ENCODE measurements at regions of chr5 and their contacts with region 1.

Region 1: DNA sequence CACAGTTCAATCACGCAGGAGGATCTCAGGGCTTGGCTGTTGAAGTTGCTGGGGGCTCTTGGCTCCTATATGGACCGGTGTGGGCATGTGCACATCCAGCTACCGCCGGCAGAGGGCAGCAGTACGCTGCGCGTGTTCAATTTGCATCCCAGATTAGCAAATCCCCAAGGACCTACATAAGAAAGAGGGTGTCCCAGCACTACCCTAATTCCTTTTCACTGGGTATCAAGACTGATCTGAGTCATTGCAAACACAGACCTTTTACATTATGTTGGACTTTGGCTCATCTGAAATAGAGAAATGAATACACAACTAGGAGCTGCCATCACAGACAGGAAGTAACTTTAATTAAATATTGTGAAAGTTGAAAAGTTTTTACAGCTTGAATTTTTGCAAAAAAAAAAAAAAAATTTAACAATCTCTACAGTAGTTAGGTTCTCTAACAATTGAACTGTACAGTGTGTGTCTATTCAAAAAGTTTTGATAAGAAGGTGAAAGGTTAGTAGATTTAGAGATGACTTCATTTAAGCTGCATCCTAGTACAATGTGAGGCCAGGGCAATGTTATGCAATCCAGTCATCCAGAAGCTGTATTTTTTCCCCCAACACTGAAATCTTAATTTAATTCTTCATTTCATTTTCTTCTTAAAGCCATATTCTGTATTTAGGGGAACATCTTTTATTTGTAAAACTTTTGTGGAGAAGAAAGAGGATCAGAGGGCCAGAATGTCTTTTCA is 404.0 kb downstream of the EBF1 start:
- DNase-seq: peak; percentile 79
- ATAC-seq: peak; percentile 80
- H3K4me3 Mint-ChIP-seq: no peak overlapping the region
- H3K27ac Mint-ChIP-seq: no peak overlapping the region
- H3K4me1 Mint-ChIP-seq: peaks cover 2% of the 10 kb centered on the region
- H3K27me3 Mint-ChIP-seq: no peaks in the 10 kb centered on the region
- CTCF ChIP-seq: peak; percentile 98

Region 2: DNA sequence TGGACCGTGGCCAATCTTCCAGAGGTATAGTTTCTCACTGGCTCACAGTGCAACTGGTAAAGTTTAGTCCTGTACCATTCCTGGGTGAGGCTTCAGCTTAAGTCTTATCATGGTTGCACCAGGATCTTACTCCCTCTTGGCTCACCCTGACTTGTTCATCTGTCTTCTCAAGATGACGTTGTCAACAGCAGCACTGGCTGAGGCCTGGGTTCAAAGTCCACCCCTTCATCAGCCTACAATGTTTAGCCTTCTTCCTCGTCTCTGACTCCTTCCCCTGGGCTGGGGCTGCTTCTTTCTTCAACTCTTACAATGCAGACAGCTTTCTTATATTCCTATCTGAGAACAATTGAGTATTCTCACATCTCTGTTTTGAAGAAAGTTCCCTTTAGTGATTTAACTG is 525.7 kb before region 1 on chr5:
- CTCF ChIA-PET with region 1: interaction called, 19 read pairs
- POLR2A ChIA-PET with region 1: no interaction called
- intact Hi-C with region 1: loop called (anchors 10 kb)
- DNase-seq: no peak
- ATAC-seq: no peak
- H3K4me3 Mint-ChIP-seq: no peak overlapping the region
- H3K27ac Mint-ChIP-seq: no peak overlapping the region
- H3K4me1 Mint-ChIP-seq: no peaks in the 10 kb centered on the region
- H3K27me3 Mint-ChIP-seq: peaks cover 7% of the 10 kb centered on the region
- CTCF ChIP-seq: no peak

Region 3: DNA sequence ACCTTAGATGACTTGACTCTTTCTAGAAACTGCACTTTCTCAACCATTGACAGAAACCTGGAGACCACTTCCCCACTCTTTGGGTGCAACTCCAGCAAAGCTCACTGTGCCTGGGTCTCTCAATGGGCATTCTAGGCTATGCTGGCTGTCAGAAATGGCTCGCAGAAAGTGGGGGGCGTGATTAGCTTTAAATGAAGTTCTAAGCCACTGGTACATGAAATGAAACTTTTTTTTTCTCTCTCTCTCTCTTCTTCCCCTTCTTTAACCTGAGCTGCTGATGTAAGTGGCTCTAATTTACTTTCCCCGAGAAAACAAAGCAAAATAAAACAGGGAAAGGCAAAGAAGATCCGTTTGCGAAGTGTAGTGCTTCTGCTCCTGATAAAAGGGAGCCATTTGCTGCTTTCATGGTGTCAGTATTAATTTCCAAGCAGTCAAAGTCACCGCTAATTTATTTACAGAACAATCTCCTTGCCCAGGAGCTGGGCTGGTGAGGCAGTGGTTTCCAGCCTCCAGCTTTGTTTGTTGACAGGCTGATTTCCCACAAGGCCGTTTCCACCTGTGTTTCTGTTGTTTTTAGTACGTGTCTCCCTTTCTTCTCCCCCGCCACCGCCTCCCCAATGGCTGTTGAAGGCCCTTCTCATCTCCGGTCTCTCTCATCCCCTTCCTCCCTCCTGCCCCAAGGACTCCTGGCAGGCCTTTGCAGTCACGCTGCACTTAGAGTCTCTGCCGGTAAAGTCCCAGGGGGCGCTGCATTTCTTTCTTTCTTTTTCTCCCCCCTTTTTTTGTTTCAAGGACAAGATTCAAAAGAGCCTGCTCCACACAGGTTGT is 18.9 kb before region 1 on chr5:
- CTCF ChIA-PET with region 1: interaction called, 11 read pairs
- POLR2A ChIA-PET with region 1: no interaction called
- intact Hi-C with region 1: no loop called
- DNase-seq: peak; percentile 21
- ATAC-seq: no peak
- H3K4me3 Mint-ChIP-seq: no peak overlapping the region
- H3K27ac Mint-ChIP-seq: peak overlapping the region; percentile 24
- H3K4me1 Mint-ChIP-seq: peaks cover 15% of the 10 kb centered on the region
- H3K27me3 Mint-ChIP-seq: no peaks in the 10 kb centered on the region
- CTCF ChIP-seq: no peak

Region 4: GRCh38 chr5:158802941-158803341 is 107.2 kb after region 1 on chr5:
- CTCF ChIA-PET with region 1: no interaction called
- POLR2A ChIA-PET with region 1: no interaction called
- intact Hi-C with region 1: no loop called
- DNase-seq: no peak
- ATAC-seq: no peak
- H3K4me3 Mint-ChIP-seq: no peak overlapping the region
- H3K27ac Mint-ChIP-seq: no peak overlapping the region
- H3K4me1 Mint-ChIP-seq: peaks cover 2% of the 10 kb centered on the region
- H3K27me3 Mint-ChIP-seq: no peaks in the 10 kb centered on the region
- CTCF ChIP-seq: no peak

Region 5: GRCh38 chr5:158875272-158875679 is 179.5 kb after region 1 on chr5:
- CTCF ChIA-PET with region 1: interaction called, 13 read pairs
- POLR2A ChIA-PET with region 1: no interaction called
- intact Hi-C with region 1: no loop called
- DNase-seq: no peak
- ATAC-seq: peak; percentile 65
- H3K4me3 Mint-ChIP-seq: no peak overlapping the region
- H3K27ac Mint-ChIP-seq: no peak overlapping the region
- H3K4me1 Mint-ChIP-seq: peaks cover 24% of the 10 kb centered on the region
- H3K27me3 Mint-ChIP-seq: no peaks in the 10 kb centered on the region
- CTCF ChIP-seq: no peak

Region 6: GRCh38 chr5:159100025-159100781 is 404.4 kb after region 1 on chr5:
- CTCF ChIA-PET with region 1: interaction called, 193 read pairs
- POLR2A ChIA-PET with region 1: no interaction called
- intact Hi-C with region 1: no loop called
- DNase-seq: peak; percentile 86
- ATAC-seq: peak; percentile 84
- H3K4me3 Mint-ChIP-seq: peak overlapping the region; percentile 76
- H3K27ac Mint-ChIP-seq: no peak overlapping the region
- H3K4me1 Mint-ChIP-seq: peaks cover 34% of the 10 kb centered on the region
- H3K27me3 Mint-ChIP-seq: peaks cover 57% of the 10 kb centered on the region
- CTCF ChIP-seq: no peak

Region 7: GRCh38 chr5:159133041-159133741 is 437.4 kb after region 1 on chr5:
- CTCF ChIA-PET with region 1: interaction called, 47 read pairs
- POLR2A ChIA-PET with region 1: no interaction called
- intact Hi-C with region 1: loop called (anchors 5 kb)
- DNase-seq: no peak
- ATAC-seq: peak; percentile 60
- H3K4me3 Mint-ChIP-seq: no peak overlapping the region
- H3K27ac Mint-ChIP-seq: no peak overlapping the region
- H3K4me1 Mint-ChIP-seq: no peaks in the 10 kb centered on the region
- H3K27me3 Mint-ChIP-seq: peaks cover 1% of the 10 kb centered on the region
- CTCF ChIP-seq: peak; percentile 82

Measured in activated CD8-positive, alpha-beta T cell treated with anti-CD3 and anti-CD28 coated beads for 36 hours (primary cell).